Common myeloid progenitor, CD34-positive (primary cell): ENCODE measurements at regions of chr13 and their contacts with region 1.

Region 1: DNA sequence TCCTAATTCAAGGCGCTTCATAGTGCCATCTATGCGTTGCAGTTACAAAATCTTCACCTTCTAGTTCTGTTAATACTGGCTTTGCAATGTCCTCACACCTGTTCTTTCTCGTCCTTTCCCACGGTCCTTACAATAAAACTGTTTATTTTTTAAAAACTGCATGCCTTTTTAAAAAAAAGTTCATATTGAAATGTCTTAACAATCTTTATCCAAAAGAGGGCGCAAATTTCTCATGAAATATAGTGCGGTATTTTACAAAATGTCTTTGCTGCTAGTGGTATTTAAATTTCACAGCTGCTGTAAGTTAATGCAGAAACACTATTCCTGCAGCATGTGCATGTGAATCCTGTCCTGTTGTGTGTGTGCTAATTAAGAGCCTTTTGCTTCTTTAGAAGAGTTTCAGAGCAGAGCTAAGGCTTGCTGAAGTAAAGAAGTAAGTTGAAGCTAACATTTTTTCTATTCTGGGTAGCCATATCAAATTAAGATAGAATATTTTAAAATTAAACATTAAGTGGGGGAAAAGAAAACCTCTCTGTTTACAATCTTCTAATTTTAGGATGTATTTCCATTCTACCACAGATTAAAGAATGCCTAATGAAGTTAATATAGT is 15.8 kb upstream of the CLDN10 start:
- DNase-seq: peak; percentile 35 to 67 (median 65)
- H3K4me3 ChIP-seq: no peak overlapping the region
- H3K27ac ChIP-seq: no peak overlapping the region
- H3K4me1 ChIP-seq: peaks cover 6 to 14% (median 11%) of the 10 kb centered on the region in 4 experiments
- H3K27me3 ChIP-seq: no peaks in the 10 kb centered on the region

Region 2: GRCh38 chr13:95420501-95420900 is 116.2 kb before region 1 on chr13:
- CTCF ChIA-PET with region 1: no interaction called
- POLR2A ChIA-PET with region 1: no interaction called
- DNase-seq: peak in 2 of 3 donors; percentile 53 to 65
- H3K4me3 ChIP-seq: no peak overlapping the region
- H3K27ac ChIP-seq: no peak overlapping the region
- H3K4me1 ChIP-seq: peaks cover 0 to 10% (median 3%) of the 10 kb centered on the region in 4 experiments
- H3K27me3 ChIP-seq: no peaks in the 10 kb centered on the region

Region 3: GRCh38 chr13:95494082-95494681 is 42.6 kb before region 1 on chr13:
- CTCF ChIA-PET with region 1: interaction called, 10 read pairs
- POLR2A ChIA-PET with region 1: no interaction called
- DNase-seq: peak; percentile 71 to 84 (median 78)
- H3K4me3 ChIP-seq: no peak overlapping the region
- H3K27ac ChIP-seq: no peak overlapping the region
- H3K4me1 ChIP-seq: peaks cover 0 to 16% (median 13%) of the 10 kb centered on the region in 4 experiments
- H3K27me3 ChIP-seq: no peaks in the 10 kb centered on the region

Region 4: DNA sequence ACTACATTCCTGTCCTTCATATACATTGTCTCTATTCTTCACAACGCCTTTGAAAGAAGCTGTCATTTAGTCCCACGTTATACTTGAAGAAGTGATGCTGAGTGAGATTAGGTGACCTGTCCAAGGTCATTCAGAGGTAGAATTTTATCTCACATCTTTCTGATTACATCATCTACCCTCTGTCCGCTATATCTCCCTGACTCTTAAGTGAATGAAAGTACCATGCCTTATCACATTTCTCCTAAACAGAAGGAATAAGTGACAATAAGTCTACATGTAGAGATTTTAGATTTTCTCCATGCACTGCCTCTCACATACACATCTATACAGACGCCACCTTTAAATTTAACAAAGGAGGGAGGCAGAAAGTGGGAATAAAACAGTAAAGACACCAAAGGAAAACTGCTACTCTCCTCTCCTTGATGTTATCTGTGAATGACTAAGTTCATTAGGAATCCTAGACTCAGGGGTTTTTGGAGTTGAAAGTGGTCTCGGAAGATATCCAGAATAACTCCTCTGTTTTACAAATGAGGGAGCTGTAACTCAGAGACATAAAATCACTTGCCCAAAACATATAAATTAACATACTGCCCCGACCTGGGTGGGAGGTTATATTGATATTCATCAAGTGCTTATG is 10.9 kb after region 1 on chr13:
- CTCF ChIA-PET with region 1: interaction called, 25 read pairs
- POLR2A ChIA-PET with region 1: no interaction called
- DNase-seq: no peak
- H3K4me3 ChIP-seq: no peak overlapping the region
- H3K27ac ChIP-seq: no peak overlapping the region
- H3K4me1 ChIP-seq: peaks cover 2 to 8% (median 7%) of the 10 kb centered on the region in 4 experiments
- H3K27me3 ChIP-seq: peaks cover 0 to 21% (median 0%) of the 10 kb centered on the region in 5 experiments

Region 5: DNA sequence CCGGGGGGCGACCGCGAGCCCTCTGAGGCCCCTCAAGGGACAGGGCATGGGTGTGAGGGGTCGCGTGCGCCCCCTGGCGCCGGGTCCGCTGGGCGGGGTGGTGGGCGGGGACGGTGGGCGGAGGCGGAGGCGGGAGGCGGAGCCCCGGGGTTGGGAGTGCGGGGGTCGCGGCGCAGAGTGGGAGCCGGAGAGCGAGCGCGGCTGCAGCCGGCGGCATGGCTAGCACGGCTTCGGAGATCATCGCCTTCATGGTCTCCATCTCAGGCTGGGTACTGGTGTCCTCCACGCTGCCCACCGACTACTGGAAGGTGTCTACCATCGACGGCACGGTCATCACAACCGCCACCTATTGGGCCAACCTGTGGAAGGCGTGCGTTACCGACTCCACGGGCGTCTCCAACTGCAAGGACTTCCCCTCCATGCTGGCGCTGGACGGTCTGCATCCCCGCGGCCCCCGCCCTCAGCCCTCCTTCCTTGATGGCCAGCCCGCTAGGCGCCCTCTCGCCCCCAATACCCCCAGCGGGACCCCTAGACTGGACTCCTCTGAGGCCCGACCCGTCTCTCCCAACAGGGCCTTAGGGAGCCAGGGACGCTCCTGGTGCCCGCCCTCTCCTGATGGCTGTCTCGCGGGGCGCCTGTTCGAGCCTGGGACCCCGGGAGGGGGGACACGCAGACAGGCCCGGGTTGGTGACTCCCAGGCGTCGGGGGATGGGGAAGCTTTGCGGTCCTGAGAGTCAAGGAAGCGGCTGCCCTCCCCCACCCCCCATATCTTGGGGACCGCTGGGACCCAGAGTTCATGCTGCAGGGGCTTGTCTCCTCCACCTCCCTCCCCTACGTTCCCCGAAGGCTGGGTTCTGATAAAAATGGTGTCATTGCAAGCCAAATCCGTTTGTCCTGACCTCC is 16.1 kb after region 1 on chr13 and contains the start of gene CLDN10:
- CTCF ChIA-PET with region 1: interaction called, 25 read pairs
- POLR2A ChIA-PET with region 1: no interaction called
- DNase-seq: peak; percentile 72 to 89 (median 83)
- H3K4me3 ChIP-seq: peak within 1 kb of the TSS; percentile 71 to 89 (median 81)
- H3K27ac ChIP-seq: peak within 1 kb of the TSS in 1 of 2 experiments; percentile 45
- H3K4me1 ChIP-seq: peaks cover 8 to 29% (median 22%) of the 10 kb centered on the region in 4 experiments
- H3K27me3 ChIP-seq: peaks cover 0 to 34% (median 0%) of the 10 kb centered on the region in 5 experiments

Region 6: DNA sequence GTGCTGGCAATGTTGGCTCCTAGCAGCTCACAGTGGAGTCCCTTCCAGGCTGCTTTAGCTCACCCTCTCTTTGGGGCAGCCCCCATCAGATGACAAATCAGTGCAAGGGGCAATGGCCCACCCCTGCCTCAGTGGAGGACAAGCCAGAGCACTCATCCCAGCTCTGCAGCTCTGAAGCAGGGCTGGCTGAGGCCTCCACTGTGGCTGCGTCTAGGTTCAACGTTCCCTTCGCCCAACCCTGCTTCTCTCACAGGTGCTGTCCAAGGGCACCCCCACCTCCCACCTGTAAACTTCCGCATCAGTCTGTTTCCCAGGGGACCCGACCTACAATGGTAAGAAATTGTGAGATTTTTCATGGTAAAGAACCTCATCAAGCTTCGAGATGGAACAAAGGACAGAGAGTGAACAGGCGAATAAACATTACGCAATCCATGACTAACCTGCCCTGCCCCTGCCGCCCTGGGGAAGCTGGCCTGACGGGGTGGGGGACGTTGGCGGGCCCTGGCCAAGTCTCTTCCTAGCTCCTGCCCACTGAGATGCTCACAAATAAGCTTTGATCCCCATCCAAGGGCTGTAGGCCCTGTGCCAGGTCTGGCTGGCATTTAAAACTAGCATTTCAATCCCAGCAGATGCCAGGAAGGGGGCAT is 67.3 kb after region 1 on chr13:
- CTCF ChIA-PET with region 1: no interaction called
- POLR2A ChIA-PET with region 1: no interaction called
- DNase-seq: no peak
- H3K4me3 ChIP-seq: no peak overlapping the region
- H3K27ac ChIP-seq: no peak overlapping the region
- H3K4me1 ChIP-seq: peaks cover 0 to 6% (median 2%) of the 10 kb centered on the region in 4 experiments
- H3K27me3 ChIP-seq: no peaks in the 10 kb centered on the region

Region 7: DNA sequence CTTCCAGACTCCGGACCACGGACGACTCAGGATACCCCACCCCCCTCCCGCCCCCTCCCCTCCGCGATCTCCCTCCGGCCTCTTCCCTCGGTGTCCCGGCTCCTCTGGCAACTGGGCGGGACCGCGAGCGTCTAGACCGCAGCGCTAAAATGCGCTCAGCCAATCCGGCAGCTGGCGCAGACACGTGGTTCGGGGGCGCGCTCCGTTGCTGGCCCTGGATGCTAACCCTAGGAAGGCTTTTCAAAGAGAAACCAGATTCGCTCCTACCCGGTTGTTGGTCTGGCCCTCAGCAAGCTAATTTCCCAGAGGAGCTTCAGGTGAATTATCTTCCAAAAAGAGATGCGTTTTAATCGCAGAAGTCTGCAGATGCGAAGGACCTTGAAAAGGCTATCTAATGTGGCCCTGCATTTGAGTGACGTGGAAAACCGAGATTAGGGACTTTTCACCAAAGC is 107.9 kb after region 1 on chr13 and contains the start of gene DZIP1:
- CTCF ChIA-PET with region 1: no interaction called
- POLR2A ChIA-PET with region 1: no interaction called
- DNase-seq: peak; percentile 42 to 74 (median 70)
- H3K4me3 ChIP-seq: peak within 1 kb of the TSS; percentile 24 to 71 (median 64)
- H3K27ac ChIP-seq: no peak within 1 kb of the TSS
- H3K4me1 ChIP-seq: peaks cover 4 to 22% (median 12%) of the 10 kb centered on the region in 4 experiments
- H3K27me3 ChIP-seq: peaks cover 14 to 58% (median 26%) of the 10 kb centered on the region in 5 experiments

Region 8: GRCh38 chr13:95834134-95834765 is 297.5 kb after region 1 on chr13:
- CTCF ChIA-PET with region 1: interaction called, 39 read pairs
- POLR2A ChIA-PET with region 1: no interaction called
- DNase-seq: peak; percentile 71 to 87 (median 80)
- H3K4me3 ChIP-seq: no peak overlapping the region
- H3K27ac ChIP-seq: no peak overlapping the region
- H3K4me1 ChIP-seq: peaks cover 0 to 3% (median 0%) of the 10 kb centered on the region in 4 experiments
- H3K27me3 ChIP-seq: no peaks in the 10 kb centered on the region